Caco-2 (cell line): ENCODE measurements at regions of chr12 and their contacts with region 1.

Region 1: DNA sequence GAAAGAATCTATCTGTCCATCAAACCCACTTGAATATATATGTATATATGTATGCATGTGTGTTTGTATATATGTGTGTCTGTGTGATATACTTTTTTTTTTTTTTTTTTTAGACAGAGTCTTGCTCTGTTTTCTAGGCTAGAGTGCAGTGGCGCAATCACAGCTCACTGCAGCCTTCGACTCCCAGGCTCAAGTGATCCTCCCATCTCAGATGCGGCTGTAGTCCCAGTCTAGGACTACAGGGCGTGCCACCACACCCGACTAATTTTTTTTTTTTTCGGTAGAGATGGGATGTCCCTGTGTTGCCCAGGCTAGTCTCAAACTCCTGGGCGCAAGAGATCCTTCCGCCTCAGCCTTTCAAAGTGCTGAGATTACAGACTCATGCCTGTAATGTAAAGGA is 13.0 kb upstream of the APOBEC1 start:
- DNase-seq: peak; percentile 67 to 68
- H3K4me3 ChIP-seq: no peak overlapping the region
- H3K4me3 Mint-ChIP-seq: no peak overlapping the region
- H3K27ac Mint-ChIP-seq: peak overlapping the region; percentile 11
- H3K4me1 ChIP-seq: peaks cover 30% of the 10 kb centered on the region
- H3K4me1 Mint-ChIP-seq: peaks cover 23% of the 10 kb centered on the region
- H3K27me3 ChIP-seq: no peaks in the 10 kb centered on the region
- H3K27me3 Mint-ChIP-seq: no peaks in the 10 kb centered on the region
- CTCF ChIP-seq: peak in 1 of 2 experiments; percentile 43

Region 2: DNA sequence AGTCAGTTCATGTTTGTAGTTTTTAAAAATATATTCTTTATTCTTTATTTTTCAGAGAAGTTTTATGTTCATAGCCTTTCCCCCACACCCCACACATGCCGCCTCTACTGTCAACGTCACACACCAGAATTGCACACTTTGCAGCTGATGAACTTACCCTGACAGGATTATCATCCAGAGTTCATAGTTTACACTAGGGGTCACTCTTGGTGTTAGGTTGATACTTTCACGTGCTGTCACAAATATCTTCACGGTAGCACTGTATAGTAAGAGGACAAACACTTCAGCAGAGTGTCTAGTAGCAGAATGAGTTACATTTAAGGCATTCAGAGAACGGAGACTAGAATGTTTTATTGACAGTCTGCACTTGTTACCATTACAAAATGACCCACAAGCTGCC is 37.6 kb after region 1 on chr12:
- CTCF ChIA-PET with region 1: interaction called, 3 read pairs
- POLR2A ChIA-PET with region 1: no interaction called
- intact Hi-C with region 1: loop called (anchors 1 kb)
- DNase-seq: peak in 1 of 2 experiments; percentile 62
- H3K4me3 ChIP-seq: no peak overlapping the region
- H3K4me3 Mint-ChIP-seq: no peak overlapping the region
- H3K27ac Mint-ChIP-seq: peak overlapping the region; percentile 54
- H3K4me1 ChIP-seq: peaks cover 10% of the 10 kb centered on the region
- H3K4me1 Mint-ChIP-seq: peaks cover 27% of the 10 kb centered on the region
- H3K27me3 ChIP-seq: no peaks in the 10 kb centered on the region
- H3K27me3 Mint-ChIP-seq: no peaks in the 10 kb centered on the region
- CTCF ChIP-seq: peak; percentile 45 to 72

Region 3: GRCh38 chr12:7907009-7907408 is 228.3 kb after region 1 on chr12:
- CTCF ChIA-PET with region 1: no interaction called
- POLR2A ChIA-PET with region 1: no interaction called
- intact Hi-C with region 1: loop called (anchors 5 kb)
- DNase-seq: peak; percentile 96 to 98
- H3K4me3 ChIP-seq: no peak overlapping the region
- H3K4me3 Mint-ChIP-seq: peak overlapping the region; percentile 54
- H3K27ac Mint-ChIP-seq: peak overlapping the region; percentile 98
- H3K4me1 ChIP-seq: peaks cover 34% of the 10 kb centered on the region
- H3K4me1 Mint-ChIP-seq: peaks cover 38% of the 10 kb centered on the region
- H3K27me3 ChIP-seq: no peaks in the 10 kb centered on the region
- H3K27me3 Mint-ChIP-seq: no peaks in the 10 kb centered on the region
- CTCF ChIP-seq: peak; percentile 81 to 83

Region 4: DNA sequence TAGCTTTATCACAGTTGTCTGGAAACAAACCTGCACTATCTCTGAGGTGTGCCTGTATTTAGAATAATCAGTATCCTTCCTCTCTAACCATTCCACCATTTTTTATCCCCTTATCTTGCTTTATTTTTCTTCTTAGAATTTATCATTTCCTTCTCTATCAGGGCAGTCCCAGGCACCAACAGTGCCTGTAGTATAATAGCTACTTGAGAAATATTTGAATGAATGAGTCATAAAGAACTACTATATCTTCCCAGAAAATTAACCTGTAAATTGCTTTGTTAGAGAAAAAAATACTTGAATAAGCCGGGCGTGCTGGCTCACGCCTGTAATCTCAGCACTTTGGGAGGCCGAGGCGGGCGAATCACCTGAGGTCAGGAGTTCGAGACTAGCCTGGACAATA is 332.6 kb after region 1 on chr12:
- CTCF ChIA-PET with region 1: no interaction called
- POLR2A ChIA-PET with region 1: no interaction called
- intact Hi-C with region 1: no loop called
- DNase-seq: no peak
- H3K4me3 ChIP-seq: no peak overlapping the region
- H3K4me3 Mint-ChIP-seq: no peak overlapping the region
- H3K27ac Mint-ChIP-seq: no peak overlapping the region
- H3K4me1 ChIP-seq: 0 out of 2 replicates have a peak, but pooled peaks cover 12% of the 10 kb centered on the region
- H3K4me1 Mint-ChIP-seq: peaks cover 8% of the 10 kb centered on the region
- H3K27me3 ChIP-seq: no peaks in the 10 kb centered on the region
- H3K27me3 Mint-ChIP-seq: peaks cover 10% of the 10 kb centered on the region
- CTCF ChIP-seq: no peak